AG04449 (cell line): ENCODE measurements at regions of chr9 and their contacts with region 1.

Region 1: GRCh38 chr9:36023260-36024048 is 13.3 kb upstream of the RECK start:
- DNase-seq: no peak
- H3K4me3 ChIP-seq: no peak overlapping the region
- CTCF ChIP-seq: peak; percentile 81

Region 2: DNA sequence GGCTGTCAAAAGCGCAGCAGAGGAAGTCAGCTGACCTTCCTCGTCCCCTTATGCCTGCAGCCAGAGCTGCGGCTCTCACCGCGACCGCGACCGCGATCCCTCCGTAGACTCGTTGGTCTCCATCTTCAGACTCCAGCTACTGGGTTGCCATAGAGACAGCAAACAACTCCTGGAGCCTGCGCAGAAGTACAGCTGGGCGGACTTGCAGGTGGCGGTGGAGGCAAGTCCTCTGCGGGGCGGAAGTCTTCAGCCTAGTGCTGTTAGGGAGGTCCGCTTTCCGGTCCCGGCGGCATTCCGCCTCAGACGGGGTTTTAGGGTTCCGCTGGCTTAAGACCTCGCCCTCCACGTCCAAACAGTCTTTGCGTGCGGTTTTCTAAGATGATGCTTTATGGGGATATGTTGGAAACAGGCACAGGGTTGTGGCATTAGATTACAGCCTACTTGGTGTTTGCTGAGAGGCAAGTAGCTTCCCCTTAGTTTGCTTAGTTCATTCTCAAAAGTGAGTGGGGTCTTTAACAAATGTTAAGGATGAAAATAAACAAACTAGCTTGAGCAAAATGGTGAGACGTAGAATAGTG is 211.3 kb before region 1 on chr9 and contains the start of gene SPAG8:
- CTCF ChIA-PET with region 1: no interaction called
- POLR2A ChIA-PET with region 1: no interaction called
- DNase-seq: no peak
- H3K4me3 ChIP-seq: peak within 1 kb of the TSS; percentile 64
- CTCF ChIP-seq: no peak

Region 3: GRCh38 chr9:35903049-35903448 is 120.4 kb before region 1 on chr9:
- CTCF ChIA-PET with region 1: interaction called, 61 read pairs
- POLR2A ChIA-PET with region 1: interaction called, 7 read pairs
- DNase-seq: no peak
- H3K4me3 ChIP-seq: no peak overlapping the region
- CTCF ChIP-seq: peak; percentile 46

Region 4: DNA sequence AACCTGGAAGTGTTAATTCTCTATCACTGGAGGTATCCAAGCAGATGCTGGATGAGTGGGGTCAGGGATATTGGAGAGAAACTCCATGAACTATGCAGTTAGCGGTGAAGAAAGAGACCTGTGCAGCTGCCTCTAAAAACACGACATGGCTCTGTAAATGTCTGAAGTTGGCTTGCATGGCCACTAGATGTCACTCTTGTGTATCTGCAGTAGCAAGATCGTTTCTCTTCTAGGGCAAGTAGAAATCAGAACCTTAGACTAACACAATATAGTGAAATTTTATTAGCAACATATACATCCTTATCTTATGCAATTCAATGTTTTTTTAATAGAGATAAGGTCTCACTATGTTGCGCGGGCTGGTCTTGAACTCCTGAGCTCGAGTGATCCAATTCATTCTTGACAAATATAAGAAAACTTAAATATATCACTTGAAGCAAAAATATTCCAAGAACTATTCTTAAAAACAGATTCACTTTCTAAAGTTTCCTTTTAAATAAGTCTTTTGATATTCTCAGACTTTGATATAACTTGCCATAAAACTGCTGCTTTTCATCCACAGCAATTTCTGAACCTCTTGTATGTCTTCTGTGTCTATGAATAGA is 68.4 kb before region 1 on chr9:
- CTCF ChIA-PET with region 1: interaction called, 342 read pairs
- POLR2A ChIA-PET with region 1: interaction called, 14 read pairs
- DNase-seq: peak; percentile 57
- H3K4me3 ChIP-seq: no peak overlapping the region
- CTCF ChIP-seq: peak; percentile 81

Region 5: DNA sequence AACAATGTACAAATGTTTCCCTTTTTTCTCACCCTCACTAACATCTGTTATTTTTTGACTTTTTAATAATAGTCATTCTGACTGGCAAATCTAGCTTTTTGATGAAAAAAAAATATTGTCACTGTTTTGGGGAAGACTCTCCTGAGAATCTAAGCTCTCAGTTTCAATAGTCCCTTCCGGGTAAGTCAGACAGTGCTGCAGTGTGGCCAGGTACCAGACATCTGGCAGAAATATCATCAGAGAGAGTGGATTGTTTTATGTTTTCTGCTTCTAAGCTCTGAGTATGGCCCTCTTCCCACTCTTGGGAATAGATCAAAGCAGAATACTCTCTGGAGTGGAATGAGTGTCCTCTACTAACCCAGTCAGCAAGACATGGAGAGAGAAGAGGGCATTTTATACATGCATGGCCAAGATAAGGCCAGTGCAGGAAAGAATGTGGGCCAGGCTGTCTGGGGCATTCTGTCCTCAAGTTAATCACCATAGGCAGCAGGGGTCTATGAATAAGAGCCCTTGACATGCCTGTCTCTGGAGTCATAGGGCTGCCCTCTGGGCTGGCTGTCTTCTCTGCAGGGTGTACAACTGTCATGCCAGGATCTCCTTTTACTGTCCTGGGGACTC is 27.0 kb before region 1 on chr9:
- CTCF ChIA-PET with region 1: interaction called, 13 read pairs
- POLR2A ChIA-PET with region 1: no interaction called
- DNase-seq: no peak
- H3K4me3 ChIP-seq: no peak overlapping the region
- CTCF ChIP-seq: no peak

Region 6: DNA sequence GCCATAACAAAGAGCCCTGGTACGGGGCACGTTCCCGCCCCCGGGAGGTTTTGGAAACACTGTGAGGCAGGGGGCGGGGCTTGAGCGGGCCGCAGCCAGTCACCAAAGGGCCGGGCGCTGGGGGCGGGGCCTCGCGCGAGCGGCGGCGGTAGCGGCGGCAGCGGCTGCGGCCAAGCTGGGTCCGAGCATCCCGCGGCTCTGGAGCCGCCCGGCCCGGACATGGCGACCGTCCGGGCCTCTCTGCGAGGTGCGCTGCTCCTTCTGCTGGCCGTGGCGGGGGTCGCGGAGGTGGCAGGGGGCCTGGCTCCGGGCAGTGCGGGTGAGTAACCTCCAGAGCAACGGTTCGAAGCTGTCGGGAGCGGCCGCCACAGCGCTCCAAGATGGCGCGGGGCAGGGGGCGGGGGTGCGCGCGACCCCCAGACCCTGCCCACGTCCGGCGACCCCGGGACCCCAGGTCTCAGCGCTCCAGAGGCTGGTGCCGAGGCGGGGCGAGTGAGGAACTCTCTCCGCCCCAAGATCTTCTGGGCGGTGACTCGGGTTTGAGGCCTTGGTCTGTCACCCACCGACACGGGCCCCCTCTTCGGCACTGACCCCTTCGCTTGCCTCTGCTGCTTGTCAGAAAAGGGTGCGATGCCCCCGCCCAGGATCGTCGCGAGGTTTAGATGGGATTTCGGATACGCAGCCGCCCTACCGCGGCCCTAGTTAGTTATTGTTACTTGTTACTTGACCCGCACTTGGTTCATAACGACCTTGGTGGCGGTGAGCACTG is 13.5 kb after region 1 on chr9 and contains the start of gene RECK:
- CTCF ChIA-PET with region 1: interaction called, 38 read pairs
- POLR2A ChIA-PET with region 1: interaction called, 3 read pairs
- DNase-seq: no peak
- H3K4me3 ChIP-seq: peak within 1 kb of the TSS; percentile 60
- CTCF ChIP-seq: no peak

Region 7: GRCh38 chr9:36053971-36054370 is 30.5 kb after region 1 on chr9:
- CTCF ChIA-PET with region 1: no interaction called
- POLR2A ChIA-PET with region 1: no interaction called
- DNase-seq: no peak
- H3K4me3 ChIP-seq: no peak overlapping the region
- CTCF ChIP-seq: no peak

Region 8: GRCh38 chr9:36250079-36250478 is 226.6 kb after region 1 on chr9:
- CTCF ChIA-PET with region 1: no interaction called
- POLR2A ChIA-PET with region 1: no interaction called
- DNase-seq: no peak
- H3K4me3 ChIP-seq: no peak overlapping the region
- CTCF ChIP-seq: no peak

Region 9: DNA sequence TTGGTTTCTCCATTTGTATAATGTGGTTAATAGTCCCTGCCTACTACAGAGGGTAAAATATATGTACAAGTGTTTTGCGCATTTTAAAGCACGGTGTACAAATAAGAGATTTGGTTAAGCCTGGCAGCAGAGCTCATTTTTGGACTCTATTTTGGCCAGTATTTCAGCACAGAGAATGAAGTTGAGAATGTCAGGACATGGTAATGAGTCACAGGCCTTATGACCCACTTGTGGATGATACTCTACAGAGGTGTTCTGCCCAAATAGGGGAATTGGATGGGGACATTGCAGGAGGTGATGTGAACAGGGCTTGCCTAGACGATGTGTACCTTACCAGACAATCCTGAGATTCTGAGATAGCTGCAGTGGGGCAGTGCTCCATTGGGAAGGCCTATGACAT is 599.8 kb after region 1 on chr9:
- CTCF ChIA-PET with region 1: no interaction called
- POLR2A ChIA-PET with region 1: no interaction called
- DNase-seq: no peak
- H3K4me3 ChIP-seq: no peak overlapping the region
- CTCF ChIP-seq: no peak